Esophagus muscularis mucosa (tissue), 4 donors: ENCODE measurements at regions of chr11 and their contacts with region 1.

Region 1: DNA sequence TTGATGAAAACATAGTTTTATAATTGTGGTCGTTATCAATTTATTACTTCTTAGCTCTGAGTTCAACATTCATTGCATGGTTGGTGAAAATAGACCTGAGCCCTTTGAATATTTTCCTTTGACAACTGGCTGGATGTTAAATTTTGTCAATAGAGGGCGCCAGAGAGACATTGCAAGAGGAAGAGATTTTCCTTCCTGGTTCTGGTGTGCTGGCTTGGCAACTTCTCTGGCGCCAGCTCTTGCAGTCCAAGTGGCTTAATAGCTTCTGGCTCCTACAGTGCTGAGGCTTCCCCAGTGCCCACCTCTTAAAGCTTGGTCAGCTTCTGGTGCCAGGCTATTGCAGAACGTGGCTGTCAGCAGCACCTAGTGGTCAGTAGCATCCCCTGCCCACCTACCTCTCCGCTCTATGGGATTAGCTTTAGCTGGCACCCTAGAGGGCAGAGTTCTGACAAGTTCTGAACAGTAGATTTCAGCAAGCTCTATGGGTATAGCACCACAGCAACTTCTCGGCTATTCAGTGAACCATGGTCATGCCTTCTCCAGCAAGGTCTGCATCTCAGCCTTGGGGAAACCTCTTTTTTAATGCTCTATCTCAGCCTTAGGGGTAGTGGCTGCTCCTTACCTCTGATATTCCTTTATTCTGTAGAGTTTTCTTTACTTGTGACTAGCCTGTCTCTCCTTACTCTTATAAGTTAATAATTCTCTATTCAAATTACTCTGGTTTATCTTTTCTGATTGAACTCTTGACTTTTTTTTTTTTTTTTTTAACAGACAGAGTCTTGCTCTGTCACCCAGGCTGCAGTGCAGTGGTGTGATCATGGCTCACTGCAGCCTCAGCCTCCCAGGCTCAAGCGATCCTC is 59.4 kb downstream of the ACER3 start:
- DNase-seq: no peak
- H3K4me3 ChIP-seq: no peak overlapping the region
- H3K27ac ChIP-seq: no peak overlapping the region
- H3K4me1 ChIP-seq: peaks cover 12 to 15% (median 14%) of the 10 kb centered on the region in 4 donors
- H3K27me3 ChIP-seq: no peaks in the 10 kb centered on the region
- CTCF ChIP-seq: peak; percentile 71 to 88 (median 74)
- EP300 ChIP-seq: no peak
- POLR2A ChIP-seq: no peak

Region 2: GRCh38 chr11:76734456-76735420 is 185.4 kb before region 1 on chr11:
- intact Hi-C with region 1: loop called (anchors 2 kb)
- DNase-seq: no peak
- H3K4me3 ChIP-seq: no peak overlapping the region
- H3K27ac ChIP-seq: no peak overlapping the region
- H3K4me1 ChIP-seq: peaks cover 0 to 12% (median 5%) of the 10 kb centered on the region in 4 donors
- H3K27me3 ChIP-seq: peaks cover 0 to 3% (median 0%) of the 10 kb centered on the region in 4 donors
- CTCF ChIP-seq: no peak
- EP300 ChIP-seq: no peak
- POLR2A ChIP-seq: no peak

Region 3: DNA sequence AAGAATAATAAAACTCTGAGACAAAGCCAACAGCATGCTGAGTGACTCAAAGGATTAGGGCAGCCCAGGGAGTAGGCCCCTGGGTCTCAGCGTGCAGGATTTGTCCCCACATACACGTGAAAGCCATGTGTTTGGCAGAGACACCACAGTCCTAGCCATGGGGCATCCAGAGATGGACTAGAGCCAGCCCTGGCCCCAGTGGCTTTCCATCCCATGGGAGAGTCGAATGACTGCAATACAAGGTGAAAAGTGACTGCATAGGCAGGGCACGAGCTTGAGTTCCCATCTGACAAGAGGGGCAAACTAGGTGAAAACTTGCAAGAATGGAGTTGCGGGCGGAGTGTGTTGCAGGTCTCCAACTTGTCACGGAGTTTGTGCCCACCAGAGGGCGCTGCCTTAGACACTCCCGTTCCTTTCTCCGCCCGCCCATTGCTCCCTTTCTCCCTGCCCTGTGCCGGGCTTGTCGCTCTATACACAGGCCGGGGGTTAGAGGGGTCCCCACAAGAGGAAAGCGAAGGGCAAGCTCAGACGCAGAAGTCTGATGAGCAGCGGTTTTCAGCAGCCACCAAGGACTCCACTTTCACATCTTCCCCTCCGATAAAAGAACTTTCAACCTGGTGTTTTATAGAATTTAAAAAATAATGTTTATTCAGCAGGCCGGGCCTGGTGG is 112.8 kb before region 1 on chr11:
- intact Hi-C with region 1: loop called (anchors 2 kb)
- DNase-seq: peak; percentile 95
- H3K4me3 ChIP-seq: peak overlapping the region in 3 of 4 donors; percentile 12 to 22 (median 18)
- H3K27ac ChIP-seq: no peak overlapping the region
- H3K4me1 ChIP-seq: peaks cover 14 to 22% (median 17%) of the 10 kb centered on the region in 4 donors
- H3K27me3 ChIP-seq: peaks cover 0 to 7% (median 0%) of the 10 kb centered on the region in 4 donors
- CTCF ChIP-seq: peak; percentile 70 to 80 (median 73)
- EP300 ChIP-seq: no peak
- POLR2A ChIP-seq: no peak

Region 4: DNA sequence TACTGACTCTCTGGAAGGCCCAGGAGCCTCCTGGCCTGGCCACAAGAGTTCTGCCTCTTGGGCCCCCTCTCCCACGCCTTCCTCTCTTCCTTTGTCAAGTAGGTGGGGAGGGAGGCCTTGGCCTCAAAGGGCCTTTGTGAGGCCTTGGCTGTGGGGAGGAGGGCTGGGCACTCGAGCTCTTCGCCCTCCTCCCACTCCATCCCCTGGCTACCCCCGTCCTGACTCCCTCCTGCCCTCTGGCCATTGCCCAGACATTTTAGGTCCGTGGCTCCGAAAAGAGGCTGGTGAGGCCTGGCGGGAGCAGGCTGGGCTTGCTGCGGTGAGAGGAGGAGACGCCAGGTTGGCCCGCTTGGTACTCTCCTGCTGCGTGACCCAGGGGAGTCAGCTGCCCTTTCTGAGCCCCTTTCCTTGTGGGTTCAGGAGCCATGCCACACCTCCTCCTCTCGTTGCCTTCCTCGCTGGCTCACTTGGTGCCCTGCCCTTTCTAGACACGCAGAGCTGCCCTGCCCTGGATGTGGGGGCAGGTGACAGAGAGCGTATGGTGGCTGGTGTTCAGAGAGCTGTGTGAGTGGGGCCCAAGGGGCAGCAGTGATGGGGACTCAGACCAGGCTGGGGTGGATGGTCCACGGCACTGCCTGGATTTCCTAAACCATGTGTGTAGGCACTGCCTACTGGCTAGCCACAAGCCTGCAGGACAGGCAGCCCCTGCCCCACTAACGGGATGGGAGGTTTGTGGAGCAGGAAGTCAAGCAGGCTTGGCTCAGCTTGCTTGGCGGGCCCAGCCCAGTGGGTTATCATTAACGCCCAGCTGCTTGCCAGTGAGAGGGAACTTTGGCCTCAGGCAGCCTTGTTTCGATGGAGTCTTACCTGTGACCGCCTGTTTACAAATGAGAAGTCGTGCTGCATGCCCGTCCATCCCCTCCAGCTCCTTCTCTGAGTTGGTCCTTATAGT is 166.7 kb after region 1 on chr11:
- intact Hi-C with region 1: loop called (anchors 5 kb)
- DNase-seq: no peak
- H3K4me3 ChIP-seq: no peak overlapping the region
- H3K27ac ChIP-seq: peak overlapping the region in 3 of 4 donors; percentile 4 to 31 (median 30)
- H3K4me1 ChIP-seq: peaks cover 16 to 39% (median 26%) of the 10 kb centered on the region in 4 donors
- H3K27me3 ChIP-seq: no peaks in the 10 kb centered on the region
- CTCF ChIP-seq: no peak
- EP300 ChIP-seq: no peak
- POLR2A ChIP-seq: no peak

Region 5: DNA sequence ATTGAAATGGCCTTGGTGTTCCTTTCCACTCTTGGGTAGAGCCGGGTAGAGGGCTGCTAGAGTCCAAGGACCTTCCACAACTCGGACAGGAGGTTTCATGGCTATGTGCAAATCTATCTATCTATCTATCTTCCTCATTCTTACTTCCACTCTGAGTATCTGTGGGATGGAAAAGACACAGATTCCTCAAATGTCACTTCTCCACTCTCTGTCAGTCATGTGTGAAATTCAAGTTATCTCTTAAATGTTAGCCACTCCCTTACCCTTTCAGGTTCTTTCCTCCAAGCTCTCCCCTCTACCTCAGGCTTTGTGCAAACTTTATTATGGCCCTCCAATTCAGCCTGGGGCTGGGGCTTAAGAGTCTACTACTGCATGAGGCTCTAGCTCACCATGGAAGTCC is 297.0 kb after region 1 on chr11:
- intact Hi-C with region 1: no loop called
- DNase-seq: no peak
- H3K4me3 ChIP-seq: no peak overlapping the region
- H3K27ac ChIP-seq: no peak overlapping the region
- H3K4me1 ChIP-seq: no peaks in the 10 kb centered on the region
- H3K27me3 ChIP-seq: no peaks in the 10 kb centered on the region
- CTCF ChIP-seq: no peak
- EP300 ChIP-seq: no peak
- POLR2A ChIP-seq: no peak